IMR-90 (cell line): ENCODE measurements at regions of chr16 and their contacts with region 1.

Region 1: GRCh38 chr16:69396187-69397061 is 10.6 kb upstream of the TERF2 start:
- DNase-seq: peak; percentile 96
- ATAC-seq: peak; percentile 79
- H3K4me3 ChIP-seq: peak overlapping the region; percentile 13; the same call in 1 of the 2 replicates
- H3K27ac ChIP-seq: peak overlapping the region; percentile 62; the same call in 1 of the 2 replicates
- H3K4me1 ChIP-seq: peaks cover 12% of the 10 kb centered on the region
- H3K27me3 ChIP-seq: no peaks in the 10 kb centered on the region; the same call in 1 of the 2 replicates
- CTCF ChIP-seq: peak; percentile 73
- POLR2A ChIP-seq: no peak
- RAD21 ChIP-seq: peak; percentile 65

Region 2: DNA sequence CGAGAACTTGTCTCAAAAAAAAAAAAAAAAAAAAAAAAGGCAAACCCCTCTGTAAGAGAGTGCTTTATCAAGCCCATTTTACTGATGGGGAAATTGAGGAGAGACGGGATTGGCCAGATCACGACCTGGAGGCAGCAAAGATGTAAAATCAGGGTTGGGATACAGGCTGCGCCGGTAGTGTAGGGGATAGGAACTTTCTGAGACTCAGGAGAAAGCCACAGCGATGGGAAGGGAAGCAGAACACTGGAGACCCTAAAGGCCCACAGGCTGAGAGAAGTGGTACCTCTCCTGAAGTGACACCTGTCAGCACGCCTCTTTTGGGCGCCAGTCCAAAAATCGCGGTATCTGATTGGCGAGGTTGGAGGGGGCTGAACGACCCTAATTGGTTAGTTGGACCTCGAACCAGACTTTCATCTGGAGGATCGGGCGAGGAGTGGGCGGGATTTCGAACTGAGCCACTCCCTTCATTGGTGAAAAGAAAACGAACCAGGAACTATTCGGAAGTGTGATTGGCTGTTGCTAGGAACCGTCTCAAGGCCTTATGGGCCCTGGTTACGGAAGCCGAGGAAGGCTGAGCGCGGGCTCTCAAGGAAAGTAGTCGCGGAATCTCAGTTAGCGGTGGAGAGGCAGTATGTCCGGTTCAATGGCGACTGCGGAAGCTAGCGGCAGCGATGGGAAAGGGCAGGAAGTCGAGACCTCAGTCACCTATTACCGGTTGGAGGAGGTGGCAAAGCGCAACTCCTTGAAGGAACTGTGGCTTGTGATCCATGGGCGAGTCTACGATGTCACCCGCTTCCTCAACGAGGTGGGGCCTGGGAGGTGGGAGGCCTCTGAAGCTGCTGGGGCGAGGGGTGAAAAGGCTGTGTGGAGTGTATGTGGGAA is 27.9 kb after region 1 on chr16 and contains the start of gene CYB5B:
- CTCF ChIA-PET with region 1: no interaction called
- POLR2A ChIA-PET with region 1: interaction called, 3 read pairs
- dilution Hi-C with region 1: no loop called
- in situ Hi-C with region 1: no loop called
- intact Hi-C with region 1: loop called (anchors 2 kb)
- DNase-seq: peak; percentile 99
- ATAC-seq: peak; percentile 99
- H3K4me3 ChIP-seq: peak within 1 kb of the TSS; percentile 73
- H3K27ac ChIP-seq: peak within 1 kb of the TSS; percentile 79
- H3K4me1 ChIP-seq: no peaks in the 10 kb centered on the region; the same call in 1 of the 2 replicates
- H3K27me3 ChIP-seq: no peaks in the 10 kb centered on the region
- CTCF ChIP-seq: no peak
- POLR2A ChIP-seq: peak; percentile 72
- RAD21 ChIP-seq: peak; percentile 21
- total RNA-seq, gene CYB5B: 102 and 106 TPM in 2 replicates

Region 3: GRCh38 chr16:69465083-69465721 is 68.8 kb after region 1 on chr16:
- CTCF ChIA-PET with region 1: interaction called, 5 read pairs
- POLR2A ChIA-PET with region 1: no interaction called
- dilution Hi-C with region 1: no loop called
- in situ Hi-C with region 1: no loop called
- intact Hi-C with region 1: loop called (anchors 2 kb)
- DNase-seq: peak; percentile 79
- ATAC-seq: peak; percentile 88
- H3K4me3 ChIP-seq: no peak overlapping the region
- H3K27ac ChIP-seq: peak overlapping the region; percentile 62; the same call in 1 of the 2 replicates
- H3K4me1 ChIP-seq: peaks cover 10% of the 10 kb centered on the region
- H3K27me3 ChIP-seq: no peaks in the 10 kb centered on the region
- CTCF ChIP-seq: no peak
- POLR2A ChIP-seq: no peak
- RAD21 ChIP-seq: no peak

Region 4: DNA sequence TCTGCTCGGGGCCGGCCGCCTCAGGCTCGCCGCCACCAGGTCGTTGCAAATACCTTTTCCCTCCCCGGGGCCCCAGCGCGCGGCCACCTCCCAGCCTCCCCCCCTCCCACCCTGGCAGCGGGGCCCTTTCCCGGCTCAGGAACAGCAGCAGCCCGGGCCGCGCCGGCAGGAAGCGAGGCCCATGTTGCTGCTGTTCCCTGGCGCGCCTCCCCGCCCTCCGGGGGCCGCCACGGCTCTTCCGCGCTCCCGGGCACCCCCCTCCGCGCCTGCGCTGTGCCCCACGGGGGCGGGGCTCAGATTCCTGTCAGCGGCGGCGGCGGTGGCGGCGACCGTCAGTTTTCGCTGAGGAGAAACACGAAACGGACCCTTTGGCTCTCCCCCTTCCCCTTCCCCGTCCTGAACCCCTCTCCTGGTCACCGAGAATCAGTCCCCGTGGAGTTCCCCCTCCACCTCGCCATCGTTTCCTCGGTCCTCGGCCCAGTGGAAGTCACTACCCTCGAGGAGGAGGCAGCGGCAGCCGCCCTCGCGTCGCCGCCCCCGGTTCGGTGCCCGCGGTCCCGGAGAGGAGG is 169.3 kb after region 1 on chr16 and contains the start of gene NFAT5:
- CTCF ChIA-PET with region 1: no interaction called
- POLR2A ChIA-PET with region 1: no interaction called
- dilution Hi-C with region 1: no loop called
- in situ Hi-C with region 1: no loop called
- intact Hi-C with region 1: loop called (anchors 1 kb)
- DNase-seq: peak; percentile 74
- ATAC-seq: peak; percentile 86
- H3K4me3 ChIP-seq: peak within 1 kb of the TSS; percentile 95
- H3K27ac ChIP-seq: peak within 1 kb of the TSS; percentile 99
- H3K4me1 ChIP-seq: peaks cover 7% of the 10 kb centered on the region
- H3K27me3 ChIP-seq: no peaks in the 10 kb centered on the region
- CTCF ChIP-seq: no peak
- POLR2A ChIP-seq: peak; percentile 71; the same call in 1 of the 2 replicates
- RAD21 ChIP-seq: peak; percentile 21; the same call in 1 of the 2 replicates
- total RNA-seq, gene NFAT5: 16.9 and 20.1 TPM in 2 replicates

Region 5: GRCh38 chr16:69680358-69680757 is 283.9 kb after region 1 on chr16:
- CTCF ChIA-PET with region 1: no interaction called
- POLR2A ChIA-PET with region 1: no interaction called
- dilution Hi-C with region 1: no loop called
- in situ Hi-C with region 1: loop called (anchors 10 kb)
- intact Hi-C with region 1: no loop called
- DNase-seq: no peak
- ATAC-seq: no peak
- H3K4me3 ChIP-seq: no peak overlapping the region
- H3K27ac ChIP-seq: no peak overlapping the region
- H3K4me1 ChIP-seq: no peaks in the 10 kb centered on the region
- H3K27me3 ChIP-seq: no peaks in the 10 kb centered on the region
- CTCF ChIP-seq: no peak
- POLR2A ChIP-seq: no peak
- RAD21 ChIP-seq: no peak

Region 6: GRCh38 chr16:69691980-69692911 is 295.8 kb after region 1 on chr16:
- CTCF ChIA-PET with region 1: no interaction called
- POLR2A ChIA-PET with region 1: no interaction called
- dilution Hi-C with region 1: no loop called
- in situ Hi-C with region 1: loop called (anchors 10 kb)
- intact Hi-C with region 1: loop called (anchors 5 kb)
- DNase-seq: peak; percentile 73
- ATAC-seq: peak; percentile 77
- H3K4me3 ChIP-seq: no peak overlapping the region
- H3K27ac ChIP-seq: no peak overlapping the region
- H3K4me1 ChIP-seq: 0 out of 2 replicates have a peak, but pooled peaks cover 2% of the 10 kb centered on the region
- H3K27me3 ChIP-seq: no peaks in the 10 kb centered on the region
- CTCF ChIP-seq: no peak
- POLR2A ChIP-seq: no peak
- RAD21 ChIP-seq: no peak

Region 7: GRCh38 chr16:69754469-69755310 is 358.3 kb after region 1 on chr16 and contains the start of gene NOB1:
- CTCF ChIA-PET with region 1: interaction called, 14 read pairs
- POLR2A ChIA-PET with region 1: interaction called, 3 read pairs
- dilution Hi-C with region 1: no loop called
- in situ Hi-C with region 1: loop called (anchors 5 kb)
- intact Hi-C with region 1: loop called (anchors 2 kb)
- DNase-seq: peak; percentile 96
- ATAC-seq: peak; percentile 97
- H3K4me3 ChIP-seq: peak within 1 kb of the TSS; percentile 78
- H3K27ac ChIP-seq: peak within 1 kb of the TSS; percentile 73
- H3K4me1 ChIP-seq: no peaks in the 10 kb centered on the region
- H3K27me3 ChIP-seq: no peaks in the 10 kb centered on the region
- CTCF ChIP-seq: peak; percentile 99
- POLR2A ChIP-seq: peak; percentile 86
- RAD21 ChIP-seq: peak; percentile 88
- total RNA-seq, gene NOB1: 36.4 and 47.0 TPM in 2 replicates

Region 8: DNA sequence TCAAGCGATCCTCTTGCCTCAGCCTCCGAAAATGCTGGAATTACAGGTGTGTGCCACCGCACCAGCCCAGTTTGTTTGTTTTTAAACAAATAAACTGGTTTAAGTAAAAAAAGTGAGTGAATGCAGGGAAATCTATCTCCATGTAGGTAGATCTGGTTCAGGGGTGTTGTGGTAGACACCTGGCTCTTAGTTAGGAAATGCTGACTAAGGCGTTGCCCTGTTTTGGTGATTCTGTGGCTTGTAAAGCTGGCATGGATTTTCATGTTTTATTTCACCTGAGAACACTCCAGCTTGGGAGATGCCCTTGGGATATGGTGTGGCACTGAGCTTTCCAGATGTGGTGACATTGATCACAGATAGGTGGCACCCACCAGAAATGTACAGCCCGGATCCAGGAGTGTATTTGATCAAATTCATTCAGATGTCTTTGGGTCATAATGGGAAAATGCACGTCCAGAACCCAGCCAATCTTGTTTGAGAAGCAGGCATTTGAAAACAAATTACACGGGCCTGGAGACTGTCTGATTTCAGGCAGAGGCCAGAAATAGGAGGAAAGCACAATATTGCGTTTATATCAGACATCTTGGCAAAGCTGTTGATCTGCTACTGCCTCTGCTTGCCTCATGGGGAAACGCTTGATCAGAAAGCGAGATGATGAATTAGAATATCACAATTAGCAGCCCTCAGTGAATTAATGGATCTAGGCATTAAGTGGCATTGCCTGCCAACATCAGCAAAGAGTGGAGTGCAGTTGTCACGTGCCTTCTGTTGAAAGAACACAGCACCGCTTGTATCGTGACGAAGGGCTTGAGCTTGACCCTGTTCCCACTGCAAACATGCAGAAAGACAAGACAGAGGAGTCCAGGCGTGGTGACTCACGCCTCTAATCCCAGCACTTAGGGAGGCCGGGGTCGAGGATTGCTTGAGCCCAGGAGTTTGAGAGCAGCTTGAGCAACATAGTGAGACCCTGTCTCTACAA is 1242.7 kb after region 1 on chr16:
- CTCF ChIA-PET with region 1: no interaction called
- POLR2A ChIA-PET with region 1: no interaction called
- dilution Hi-C with region 1: no loop called
- in situ Hi-C with region 1: no loop called
- intact Hi-C with region 1: no loop called
- DNase-seq: peak; percentile 87
- ATAC-seq: peak; percentile 58
- H3K4me3 ChIP-seq: no peak overlapping the region
- H3K27ac ChIP-seq: peak overlapping the region; percentile 25; the same call in 1 of the 2 replicates
- H3K4me1 ChIP-seq: peaks cover 11% of the 10 kb centered on the region
- H3K27me3 ChIP-seq: no peaks in the 10 kb centered on the region
- CTCF ChIP-seq: no peak
- POLR2A ChIP-seq: no peak
- RAD21 ChIP-seq: no peak